ENCODE measurements at regions of chr16 and their contacts with region 1.

Region 1: DNA sequence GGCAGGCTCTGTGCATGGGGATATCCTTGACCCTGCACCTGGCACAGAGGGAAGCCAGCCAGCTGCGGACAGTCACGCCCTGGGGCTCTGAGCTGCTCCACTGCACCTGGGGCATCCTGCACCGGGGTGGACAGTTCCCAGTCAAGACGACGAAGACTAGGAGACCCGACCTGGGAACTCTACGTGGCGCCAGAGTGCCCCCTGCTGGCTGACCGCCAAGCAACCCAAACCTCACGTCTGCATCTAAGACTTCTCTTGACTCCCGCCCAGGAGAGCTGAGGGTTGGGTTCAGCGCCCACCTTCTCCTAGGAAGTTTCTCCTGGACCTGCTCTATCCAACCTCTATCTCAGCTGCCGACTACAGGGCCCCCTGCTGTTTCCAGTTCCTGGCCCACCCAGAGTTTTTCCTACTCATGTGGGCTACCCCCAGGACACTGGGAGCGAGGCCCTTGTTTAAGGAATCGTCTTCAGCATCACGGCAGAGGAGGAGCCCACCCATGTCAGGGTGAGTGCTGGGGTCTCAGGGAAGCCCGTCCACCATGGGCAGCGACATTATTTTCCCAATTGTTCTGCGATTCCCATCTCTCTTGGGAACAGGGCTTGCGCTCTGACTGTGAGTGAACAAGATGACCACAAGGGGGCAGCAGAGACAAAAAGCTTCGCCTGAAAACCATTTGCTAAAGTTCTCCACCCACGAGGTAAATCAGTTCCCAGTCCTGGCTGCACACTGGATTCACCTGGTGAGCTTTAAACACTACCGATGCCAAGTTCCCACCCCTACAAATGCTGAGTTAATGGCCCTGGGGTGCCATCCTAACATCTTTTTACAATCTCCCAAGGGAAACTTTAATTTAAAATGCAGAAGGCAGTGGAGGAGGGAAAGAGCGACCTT is 29.3 kb downstream of the TLE7 start:
- DNase-seq: no peak
- H3K4me3 ChIP-seq: no peak overlapping the region
- CTCF ChIP-seq: peak; percentile 81

Region 2: DNA sequence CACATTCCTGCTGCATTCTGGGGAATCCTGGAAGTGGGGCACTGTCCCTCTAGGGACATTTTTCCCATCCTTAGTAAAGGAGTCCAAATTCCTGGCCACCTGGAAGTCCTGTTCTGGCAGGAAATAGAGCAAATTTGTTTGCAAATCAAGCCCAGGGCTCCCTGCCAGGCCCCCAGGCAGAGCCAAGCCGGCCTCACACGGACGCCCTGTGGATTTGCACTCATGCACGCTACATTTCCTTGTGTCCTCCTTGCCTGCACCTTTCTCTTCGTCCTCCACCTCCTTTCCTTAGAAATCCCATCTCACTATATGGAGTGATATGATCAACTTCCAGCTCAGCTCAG is 61.0 kb before region 1 on chr16:
- CTCF ChIA-PET with region 1: no interaction called
- POLR2A ChIA-PET with region 1: no interaction called
- DNase-seq: no peak
- H3K4me3 ChIP-seq: no peak overlapping the region
- CTCF ChIP-seq: no peak

Region 3: GRCh38 chr16:71426072-71426879 is 13.8 kb after region 1 on chr16:
- CTCF ChIA-PET with region 1: interaction called, 19 read pairs
- POLR2A ChIA-PET with region 1: no interaction called
- DNase-seq: peak; percentile 67
- H3K4me3 ChIP-seq: peak overlapping the region; percentile 40
- CTCF ChIP-seq: no peak

Region 4: DNA sequence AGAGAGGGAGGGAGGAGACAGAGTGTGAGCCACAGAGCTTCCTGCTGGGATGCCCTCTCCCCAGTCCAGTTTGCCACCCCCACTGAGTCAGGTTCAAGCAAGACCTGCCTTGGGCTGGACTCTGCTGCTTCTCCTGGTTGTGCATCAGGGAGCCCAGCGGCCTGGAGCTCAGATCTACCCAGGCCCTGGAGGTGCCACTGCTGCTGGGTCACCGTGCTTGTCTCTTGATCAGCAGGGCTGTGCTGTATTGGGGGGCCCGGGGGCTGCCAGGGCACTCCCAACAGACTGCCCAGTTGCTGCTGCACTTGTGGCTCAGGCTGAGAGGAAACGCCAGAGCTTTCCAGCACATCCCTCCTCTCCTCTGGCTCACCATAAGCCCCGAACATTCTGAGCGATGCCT is 20.4 kb after region 1 on chr16:
- CTCF ChIA-PET with region 1: interaction called, 14 read pairs
- POLR2A ChIA-PET with region 1: no interaction called
- DNase-seq: no peak
- H3K4me3 ChIP-seq: no peak overlapping the region
- CTCF ChIP-seq: no peak

Region 5: GRCh38 chr16:71461686-71462648 is 49.5 kb after region 1 on chr16 and contains the start of gene ZNF23:
- CTCF ChIA-PET with region 1: interaction called, 21 read pairs
- POLR2A ChIA-PET with region 1: no interaction called
- DNase-seq: no peak
- H3K4me3 ChIP-seq: peak within 1 kb of the TSS; percentile 98
- CTCF ChIP-seq: no peak

Region 6: DNA sequence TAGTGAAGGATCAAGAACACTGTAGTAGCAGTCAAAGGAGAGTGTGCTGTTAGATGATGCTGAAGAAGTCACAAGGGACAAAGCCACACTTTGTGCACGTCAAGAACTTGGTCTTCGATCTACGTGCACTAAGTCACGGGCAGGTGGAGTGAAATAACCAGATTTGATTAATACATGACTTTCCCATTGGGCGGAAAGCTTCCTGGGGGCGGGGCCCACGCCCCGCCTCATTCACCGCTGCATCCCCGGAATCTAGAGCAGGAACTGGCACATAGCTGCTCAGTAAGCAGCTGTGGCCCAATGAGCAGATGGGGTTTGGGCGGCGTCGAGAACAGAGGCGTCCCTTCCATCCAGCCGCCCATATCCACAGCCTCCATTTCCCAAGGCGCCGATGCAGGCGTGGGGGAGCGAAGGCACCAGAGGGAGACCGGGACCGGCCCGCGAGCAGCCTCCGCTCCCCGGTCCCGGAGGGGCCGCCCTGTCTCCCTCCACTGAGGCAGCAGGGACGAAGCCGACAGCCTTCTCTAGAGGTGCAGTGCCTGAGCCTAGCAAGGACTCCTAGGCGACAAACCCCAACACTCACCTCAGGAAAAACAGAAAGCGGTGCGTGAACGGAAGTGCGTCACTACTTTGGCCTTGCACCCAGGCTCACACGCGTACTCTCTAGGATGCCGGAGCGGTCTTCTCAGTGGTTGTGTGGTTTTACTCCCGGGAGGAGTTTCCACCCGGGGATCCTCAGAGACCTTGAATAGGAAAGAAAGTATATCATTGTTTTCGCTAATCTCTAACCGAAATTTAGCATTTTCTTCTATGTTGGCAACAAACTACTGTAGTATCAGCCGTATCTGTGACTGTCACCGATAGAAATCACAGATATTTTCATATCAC is 71.7 kb after region 1 on chr16:
- CTCF ChIA-PET with region 1: interaction called, 173 read pairs
- POLR2A ChIA-PET with region 1: no interaction called
- DNase-seq: peak; percentile 82
- H3K4me3 ChIP-seq: peak overlapping the region; percentile 93
- CTCF ChIP-seq: no peak

Region 7: DNA sequence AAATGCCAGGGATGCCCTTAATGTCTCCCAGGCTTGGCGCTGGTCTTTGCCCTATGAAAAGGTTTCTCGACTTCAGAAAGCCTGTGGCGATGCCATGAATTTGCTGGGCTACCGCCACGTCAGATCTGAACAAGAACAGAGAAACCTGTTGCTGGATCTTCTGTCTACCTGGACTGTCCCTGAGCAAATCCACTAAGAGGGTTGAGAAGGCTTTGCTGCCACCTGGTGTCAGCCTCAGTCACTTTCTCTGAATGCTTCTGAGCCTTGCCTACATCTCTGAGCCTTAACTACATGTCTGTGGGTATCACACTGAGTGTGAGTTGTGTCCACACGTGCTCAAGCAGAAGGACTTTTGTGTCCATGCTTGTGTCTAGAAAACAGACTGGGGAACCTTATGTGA is 125.1 kb after region 1 on chr16:
- CTCF ChIA-PET with region 1: interaction called, 12 read pairs
- POLR2A ChIA-PET with region 1: no interaction called
- DNase-seq: no peak
- H3K4me3 ChIP-seq: no peak overlapping the region
- CTCF ChIP-seq: peak; percentile 77

Region 8: DNA sequence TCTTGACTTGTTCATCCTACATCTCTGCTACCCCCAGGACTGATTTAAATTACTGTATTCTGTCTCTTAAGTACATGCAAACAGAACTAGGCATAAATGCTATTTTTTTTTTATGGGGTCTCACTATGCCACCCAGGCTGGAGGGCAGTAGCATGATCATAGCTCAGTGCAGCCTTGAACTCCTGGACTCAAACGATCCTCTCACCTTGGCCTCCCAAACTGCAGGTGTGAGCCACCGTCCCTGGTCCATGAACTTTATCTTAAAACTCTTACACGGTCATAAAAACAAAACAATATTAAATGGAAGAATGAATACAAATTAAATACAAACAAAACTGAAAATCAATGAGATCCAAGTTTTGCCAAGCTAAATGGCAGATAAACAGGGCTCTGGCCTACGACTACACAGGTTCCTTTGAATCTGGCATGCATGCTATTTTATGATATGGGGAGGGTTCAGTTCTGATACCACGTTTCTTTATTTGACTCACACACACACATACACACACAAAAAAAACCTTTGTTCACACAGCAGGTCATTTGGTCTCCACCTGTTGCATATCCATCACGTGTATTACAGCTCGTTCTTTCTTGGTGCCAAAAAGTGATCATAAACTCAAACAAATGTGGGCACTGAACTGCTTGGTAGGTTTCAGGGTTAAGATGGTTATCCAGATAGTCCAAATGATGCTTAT is 588.8 kb after region 1 on chr16:
- CTCF ChIA-PET with region 1: no interaction called
- POLR2A ChIA-PET with region 1: no interaction called
- DNase-seq: no peak
- H3K4me3 ChIP-seq: no peak overlapping the region
- CTCF ChIP-seq: no peak

Measured in AG04449 (cell line).